ENCODE measurements at regions of chr12 and their contacts with region 1.

Region 1: GRCh38 chr12:80837348-80837985 is 100.3 kb downstream of the LIN7A start:
- DNase-seq: peak; percentile 61
- ATAC-seq: peak; percentile 95
- H3K4me3 ChIP-seq: no peak overlapping the region
- H3K27ac ChIP-seq: no peak overlapping the region
- H3K4me1 ChIP-seq: peaks cover 19% of the 10 kb centered on the region
- H3K27me3 ChIP-seq: no peaks in the 10 kb centered on the region
- CTCF ChIP-seq: peak; percentile 75
- EP300 ChIP-seq: no peak
- POLR2A ChIP-seq: no peak
- RAD21 ChIP-seq: peak; percentile 65

Region 2: GRCh38 chr12:80946594-80946993 is 109.1 kb after region 1 on chr12:
- CTCF ChIA-PET with region 1: interaction called, 6 read pairs
- POLR2A ChIA-PET with region 1: no interaction called
- in situ Hi-C with region 1: loop called (anchors 5 kb)
- intact Hi-C with region 1: loop called (anchors 1 kb)
- DNase-seq: no peak
- ATAC-seq: 0 out of 3 replicates have a peak, but pooled peaks have one; percentile 48
- H3K4me3 ChIP-seq: no peak overlapping the region
- H3K27ac ChIP-seq: no peak overlapping the region
- H3K4me1 ChIP-seq: peaks cover 22% of the 10 kb centered on the region
- H3K27me3 ChIP-seq: no peaks in the 10 kb centered on the region
- CTCF ChIP-seq: peak; percentile 34
- EP300 ChIP-seq: no peak
- POLR2A ChIP-seq: no peak
- RAD21 ChIP-seq: no peak

Region 3: GRCh38 chr12:81128930-81129554 is 291.6 kb after region 1 on chr12:
- CTCF ChIA-PET with region 1: no interaction called
- POLR2A ChIA-PET with region 1: no interaction called
- in situ Hi-C with region 1: no loop called
- intact Hi-C with region 1: loop called (anchors 1 kb)
- DNase-seq: peak; percentile 72
- ATAC-seq: peak; percentile 90
- H3K4me3 ChIP-seq: no peak overlapping the region
- H3K27ac ChIP-seq: peak overlapping the region; percentile 31
- H3K4me1 ChIP-seq: peaks cover 22% of the 10 kb centered on the region
- H3K27me3 ChIP-seq: no peaks in the 10 kb centered on the region
- CTCF ChIP-seq: peak; percentile 73
- EP300 ChIP-seq: no peak
- POLR2A ChIP-seq: no peak
- RAD21 ChIP-seq: peak; percentile 39; the same call in 1 of the 2 replicates

Region 4: GRCh38 chr12:81257947-81258551 is 420.6 kb after region 1 on chr12:
- CTCF ChIA-PET with region 1: interaction called, 3 read pairs
- POLR2A ChIA-PET with region 1: no interaction called
- in situ Hi-C with region 1: no loop called
- intact Hi-C with region 1: loop called (anchors 5 kb)
- DNase-seq: peak; percentile 34
- ATAC-seq: no peak
- H3K4me3 ChIP-seq: no peak overlapping the region
- H3K27ac ChIP-seq: no peak overlapping the region
- H3K4me1 ChIP-seq: no peaks in the 10 kb centered on the region
- H3K27me3 ChIP-seq: no peaks in the 10 kb centered on the region
- CTCF ChIP-seq: peak; percentile 41
- EP300 ChIP-seq: no peak
- POLR2A ChIP-seq: no peak
- RAD21 ChIP-seq: no peak

Measured in HepG2 (cell line).